H1 (cell line): ENCODE measurements at regions of chr18 and their contacts with region 1.

Region 1: GRCh38 chr18:62186774-62187542 is at the starts of genes PIGN and RELCH:
- DNase-seq: peak; percentile 91 to 95
- H3K4me3 ChIP-seq: peak within 1 kb of the TSS; percentile 96 to 100 (median 99)
- H3K27ac ChIP-seq: peak within 1 kb of the TSS; percentile 97
- H3K4me1 ChIP-seq: no peaks in the 10 kb centered on the region; a peak in 1 of 7 replicates
- H3K27me3 ChIP-seq: no peaks in the 10 kb centered on the region
- CTCF ChIP-seq: no peak
- EP300 ChIP-seq: no peak
- POLR2A ChIP-seq: peak; percentile 90 to 92
- RAD21 ChIP-seq: no peak; a peak in 1 of 4 replicates
- total RNA-seq, gene PIGN: 26.2 and 26.3 TPM in 2 replicates
- total RNA-seq, gene RELCH: 26.9 and 27.4 TPM in 2 replicates

Region 2: DNA sequence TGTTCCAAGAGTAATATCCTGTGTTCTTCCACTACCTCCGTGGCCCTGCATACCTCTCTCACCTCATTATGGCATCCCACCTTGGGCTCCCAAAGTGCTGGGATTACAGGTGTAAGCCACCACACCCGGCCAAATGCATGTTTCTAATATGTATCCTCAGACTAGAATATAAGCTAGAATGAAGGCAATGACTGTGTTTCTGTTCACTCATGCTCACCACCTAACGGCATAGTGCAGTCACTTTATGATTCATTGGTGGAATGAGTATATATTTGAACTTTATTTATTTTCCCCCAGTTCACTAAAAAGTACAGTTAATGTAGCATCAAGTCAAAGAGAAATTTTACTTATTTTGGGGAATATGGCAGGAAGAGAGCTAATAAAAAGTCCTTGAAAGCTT is 11.4 kb before region 1 on chr18:
- CTCF ChIA-PET with region 1: interaction called, 12 read pairs
- POLR2A ChIA-PET with region 1: interaction called, 5 read pairs
- DNase-seq: no peak
- H3K4me3 ChIP-seq: no peak overlapping the region
- H3K27ac ChIP-seq: no peak overlapping the region
- H3K4me1 ChIP-seq: no peaks in the 10 kb centered on the region
- H3K27me3 ChIP-seq: peaks cover 0 to 1% (median 0%) of the 10 kb centered on the region in 4 experiments; a peak in 1 of 7 replicates
- CTCF ChIP-seq: no peak
- EP300 ChIP-seq: no peak
- POLR2A ChIP-seq: no peak
- RAD21 ChIP-seq: no peak

Region 3: GRCh38 chr18:62198259-62198658 is 11.3 kb after region 1 on chr18:
- CTCF ChIA-PET with region 1: interaction called, 5 read pairs
- POLR2A ChIA-PET with region 1: interaction called, 23 read pairs
- DNase-seq: no peak
- H3K4me3 ChIP-seq: no peak overlapping the region
- H3K27ac ChIP-seq: no peak overlapping the region
- H3K4me1 ChIP-seq: no peaks in the 10 kb centered on the region
- H3K27me3 ChIP-seq: no peaks in the 10 kb centered on the region
- CTCF ChIP-seq: no peak
- EP300 ChIP-seq: no peak
- POLR2A ChIP-seq: no peak
- RAD21 ChIP-seq: no peak

Region 4: GRCh38 chr18:62249478-62250097 is 62.6 kb after region 1 on chr18:
- CTCF ChIA-PET with region 1: interaction called, 27 read pairs
- POLR2A ChIA-PET with region 1: interaction called, 17 read pairs
- DNase-seq: peak in 1 of 2 experiments; percentile 59
- H3K4me3 ChIP-seq: no peak overlapping the region
- H3K27ac ChIP-seq: no peak overlapping the region
- H3K4me1 ChIP-seq: no peaks in the 10 kb centered on the region
- H3K27me3 ChIP-seq: no peaks in the 10 kb centered on the region
- CTCF ChIP-seq: peak in 2 of 3 experiments; percentile 63 to 74; a peak in 3 of 4 replicates
- EP300 ChIP-seq: no peak
- POLR2A ChIP-seq: no peak
- RAD21 ChIP-seq: peak; percentile 57 to 70

Region 5: GRCh38 chr18:62741118-62741566 is 554.2 kb after region 1 on chr18:
- CTCF ChIA-PET with region 1: no interaction called
- POLR2A ChIA-PET with region 1: no interaction called
- DNase-seq: no peak
- H3K4me3 ChIP-seq: no peak overlapping the region
- H3K27ac ChIP-seq: no peak overlapping the region
- H3K4me1 ChIP-seq: peaks cover 2 to 41% (median 27%) of the 10 kb centered on the region in 4 experiments
- H3K27me3 ChIP-seq: no peaks in the 10 kb centered on the region
- CTCF ChIP-seq: no peak
- EP300 ChIP-seq: no peak
- POLR2A ChIP-seq: no peak
- RAD21 ChIP-seq: no peak